Activated T-helper 2 cell treated with anti-CD3 and anti-CD28 coated beads, Interferon-gamma antibody, Interleukin-2, Interleukin-4, amounts not matched to agents 10 μg/mL and 5 μg/mL and 100 μg/mL, durations not matched to agents 14 hours and 24 hours and 36 hours (primary cell): ENCODE measurements at regions of chr7 and their contacts with region 1.

Region 1: GRCh38 chr7:13532028-13532753 is 457.3 kb downstream of the ETV1 start:
- DNase-seq: no peak
- H3K4me3 Mint-ChIP-seq: no peak overlapping the region
- H3K27ac Mint-ChIP-seq: no peak overlapping the region
- H3K4me1 Mint-ChIP-seq: no peaks in the 10 kb centered on the region
- H3K27me3 Mint-ChIP-seq: no peaks in the 10 kb centered on the region

Region 2: DNA sequence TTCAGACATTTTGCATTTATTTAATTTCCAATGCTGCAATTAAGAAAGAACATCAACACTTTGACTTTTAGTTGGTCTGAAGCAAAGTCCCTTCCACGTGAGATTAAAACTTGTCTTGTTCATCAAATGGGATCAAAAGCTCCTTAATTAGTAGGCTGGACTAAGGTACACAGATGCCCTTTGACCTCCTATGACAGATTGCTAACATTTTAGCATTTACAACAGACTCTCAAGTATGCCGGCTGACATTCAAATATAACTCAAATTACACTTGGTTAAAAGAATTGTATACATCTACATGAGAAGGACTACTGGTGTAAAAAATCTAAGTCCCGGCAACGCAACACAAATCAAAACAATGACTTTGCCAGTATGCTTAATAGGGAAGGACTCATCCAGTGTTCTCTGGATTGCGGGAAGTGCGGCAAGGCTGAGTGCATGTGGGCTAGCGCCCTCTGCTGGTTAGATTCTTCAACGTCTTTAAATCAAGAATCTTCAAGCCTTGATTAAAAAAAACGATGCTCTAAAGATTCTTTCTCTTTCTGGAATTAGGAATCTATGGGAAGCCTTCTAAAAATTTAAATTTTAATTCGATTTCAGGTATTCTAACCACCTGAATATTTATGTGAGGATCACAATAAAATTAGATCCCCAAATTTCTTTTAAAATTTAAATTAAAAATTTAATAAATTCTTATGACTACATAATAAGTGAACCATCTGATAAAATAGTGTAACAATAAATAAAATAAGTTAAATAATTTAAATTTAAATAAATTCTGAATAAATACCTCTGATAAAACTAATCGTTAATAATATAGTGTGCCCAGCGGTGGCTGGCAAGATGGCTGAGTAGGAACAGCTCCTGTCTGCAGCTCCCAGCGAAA is 925.6 kb after region 1 on chr7:
- intact Hi-C with region 1: loop called (anchors 5 kb)
- DNase-seq: peak; percentile 10
- H3K4me3 Mint-ChIP-seq: no peak overlapping the region
- H3K27ac Mint-ChIP-seq: no peak overlapping the region
- H3K4me1 Mint-ChIP-seq: no peaks in the 10 kb centered on the region
- H3K27me3 Mint-ChIP-seq: no peaks in the 10 kb centered on the region